SK-N-SH (cell line): ENCODE measurements at regions of chr9 and their contacts with region 1.

Region 1: DNA sequence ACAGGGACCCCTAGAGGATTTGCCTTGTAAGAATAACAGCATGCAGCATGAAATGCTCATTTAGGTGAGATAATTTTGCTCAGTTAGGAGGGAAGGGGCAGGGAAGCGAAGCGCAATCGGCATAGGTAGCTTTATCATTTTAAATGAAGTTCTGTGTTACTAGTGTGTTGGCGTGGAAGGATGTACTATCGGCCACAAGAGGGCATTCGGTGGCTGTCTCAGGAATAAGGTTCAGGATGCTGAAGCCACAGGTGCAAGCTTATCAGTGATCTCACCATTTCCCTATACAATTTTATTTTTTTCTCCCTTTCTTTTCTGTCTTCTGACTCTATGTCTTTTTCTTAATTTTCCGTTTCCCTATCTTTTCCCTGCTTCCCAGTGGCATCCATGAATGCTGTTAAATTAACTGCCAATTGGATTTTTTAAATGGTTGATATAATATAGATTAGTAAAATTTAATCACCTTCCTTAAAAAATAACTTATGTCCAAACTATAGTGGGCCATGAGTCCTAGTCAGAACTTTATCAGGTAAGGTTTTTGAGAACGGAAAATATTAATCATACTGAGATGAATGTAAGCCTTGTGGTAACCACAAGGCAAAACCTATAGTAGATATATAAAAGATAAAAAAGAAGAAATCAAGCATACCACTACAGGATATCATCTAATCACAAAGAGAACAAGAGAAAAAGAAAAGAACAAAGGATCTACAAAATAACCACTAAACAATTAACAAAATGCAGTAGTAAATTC is 1.2 kb upstream of the INSL6 start:
- DNase-seq: peak; percentile 68
- H3K4me3 ChIP-seq: peak overlapping the region in 1 of 2 experiments; percentile 40; a peak in 1 of 4 replicates
- H3K27ac ChIP-seq: no peak overlapping the region
- H3K4me1 ChIP-seq: peaks cover 0 to 5% of the 10 kb centered on the region in 2 experiments; a peak in 1 of 4 replicates
- H3K27me3 ChIP-seq: no peaks in the 10 kb centered on the region
- CTCF ChIP-seq: peak; percentile 81
- EP300 ChIP-seq: no peak
- RAD21 ChIP-seq: peak; percentile 93

Region 2: DNA sequence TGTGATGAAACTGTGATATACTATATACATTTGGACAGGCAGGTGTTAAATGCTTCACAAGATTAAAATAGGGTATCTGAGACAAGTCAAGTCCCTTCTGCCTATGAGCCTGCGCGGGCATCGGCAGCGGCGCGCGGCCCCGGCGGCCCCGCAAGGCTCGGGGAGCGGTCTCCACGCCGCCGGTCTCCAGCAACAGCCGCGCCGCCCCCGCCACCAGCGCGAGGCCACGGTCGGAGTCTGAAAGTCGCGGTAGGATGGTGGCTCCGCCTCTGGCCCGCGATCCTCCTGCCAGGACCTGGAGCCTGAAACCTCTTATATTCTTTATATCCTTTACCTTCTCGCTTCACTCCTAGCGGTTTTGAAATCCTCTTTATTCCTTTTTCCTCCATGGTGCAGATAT is 100.6 kb before region 1 on chr9:
- CTCF ChIA-PET with region 1: no interaction called
- POLR2A ChIA-PET with region 1: no interaction called
- DNase-seq: no peak
- H3K4me3 ChIP-seq: no peak overlapping the region
- H3K27ac ChIP-seq: no peak overlapping the region
- H3K4me1 ChIP-seq: no peaks in the 10 kb centered on the region
- H3K27me3 ChIP-seq: no peaks in the 10 kb centered on the region
- CTCF ChIP-seq: no peak
- EP300 ChIP-seq: no peak
- RAD21 ChIP-seq: no peak

Region 3: GRCh38 chr9:5425006-5425628 is 238.5 kb after region 1 on chr9:
- CTCF ChIA-PET with region 1: interaction called, 21 read pairs
- POLR2A ChIA-PET with region 1: no interaction called
- DNase-seq: peak; percentile 37
- H3K4me3 ChIP-seq: no peak overlapping the region
- H3K27ac ChIP-seq: no peak overlapping the region
- H3K4me1 ChIP-seq: no peaks in the 10 kb centered on the region; a peak in 1 of 4 replicates
- H3K27me3 ChIP-seq: no peaks in the 10 kb centered on the region
- CTCF ChIP-seq: peak; percentile 55
- EP300 ChIP-seq: no peak
- RAD21 ChIP-seq: peak; percentile 67

Region 4: DNA sequence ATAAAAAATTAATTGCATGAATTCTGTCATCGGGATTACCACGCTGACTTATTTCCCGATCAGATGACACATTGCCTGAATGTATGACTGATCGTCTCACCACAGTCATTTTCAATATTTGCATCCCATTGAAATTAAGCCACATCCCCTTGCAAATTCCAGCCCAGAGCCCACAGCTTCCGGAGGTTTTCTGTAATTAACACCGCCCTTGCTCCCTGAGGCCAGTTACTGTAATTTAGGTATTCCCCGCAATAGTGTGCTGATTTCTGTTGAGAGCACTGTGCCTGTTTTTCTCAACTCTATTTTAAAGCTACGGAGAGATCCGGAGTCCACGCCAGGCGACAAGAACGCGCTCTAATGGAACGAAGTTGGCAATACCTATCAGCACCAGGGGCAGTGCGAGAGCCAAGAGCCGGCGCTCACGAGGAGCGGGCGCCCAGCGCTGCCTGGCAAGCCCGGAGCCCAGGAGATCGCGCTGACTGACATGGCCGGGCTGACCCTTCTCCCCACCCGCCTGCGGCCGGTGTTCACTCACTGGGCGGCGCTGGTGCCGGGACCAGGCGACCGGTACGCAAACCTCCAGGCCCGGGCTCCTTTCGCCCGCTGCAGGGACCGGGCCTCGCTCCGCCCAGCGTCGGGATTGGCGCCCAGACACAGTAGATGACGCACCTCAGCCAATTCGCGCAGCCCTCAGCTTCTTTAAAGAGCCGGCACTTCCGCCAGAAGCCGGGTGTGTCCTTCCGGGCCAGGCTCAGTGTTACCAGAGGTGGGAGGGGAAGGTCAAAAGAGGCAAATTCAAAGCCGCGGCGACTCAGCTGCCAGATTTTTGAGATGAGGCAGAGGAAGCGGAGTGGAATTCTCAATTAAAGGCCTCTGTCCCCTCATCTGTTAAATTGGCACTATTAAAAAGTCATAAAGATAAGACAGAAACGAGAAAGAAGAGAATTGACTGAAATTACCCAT is 250.9 kb after region 1 on chr9 and contains the start of gene PLGRKT:
- CTCF ChIA-PET with region 1: interaction called, 71 read pairs
- POLR2A ChIA-PET with region 1: interaction called, 3 read pairs
- DNase-seq: peak; percentile 92
- H3K4me3 ChIP-seq: peak within 1 kb of the TSS; percentile 85 to 86
- H3K27ac ChIP-seq: peak within 1 kb of the TSS; percentile 90 to 96
- H3K4me1 ChIP-seq: peaks cover 6 to 15% of the 10 kb centered on the region in 2 experiments
- H3K27me3 ChIP-seq: no peaks in the 10 kb centered on the region
- CTCF ChIP-seq: peak; percentile 36
- EP300 ChIP-seq: 0 out of 4 replicates have a peak, but pooled peaks of 1 of the 2 experiments have one; percentile 23
- RAD21 ChIP-seq: no peak
- polyA plus RNA-seq, gene PLGRKT: 11.4 and 13.1 TPM in 2 replicates

Region 5: GRCh38 chr9:5450359-5451091 is 263.9 kb after region 1 on chr9 and contains the start of gene CD274:
- CTCF ChIA-PET with region 1: interaction called, 36 read pairs
- POLR2A ChIA-PET with region 1: no interaction called
- DNase-seq: peak; percentile 82
- H3K4me3 ChIP-seq: peak within 1 kb of the TSS; percentile 64 to 67
- H3K27ac ChIP-seq: peak within 1 kb of the TSS; percentile 67 to 75
- H3K4me1 ChIP-seq: peaks cover 6 to 21% of the 10 kb centered on the region in 2 experiments
- H3K27me3 ChIP-seq: no peaks in the 10 kb centered on the region
- CTCF ChIP-seq: peak; percentile 67
- EP300 ChIP-seq: no peak
- RAD21 ChIP-seq: peak; percentile 76
- polyA plus RNA-seq, gene CD274: 25.8 and 30.9 TPM in 2 replicates

Region 6: DNA sequence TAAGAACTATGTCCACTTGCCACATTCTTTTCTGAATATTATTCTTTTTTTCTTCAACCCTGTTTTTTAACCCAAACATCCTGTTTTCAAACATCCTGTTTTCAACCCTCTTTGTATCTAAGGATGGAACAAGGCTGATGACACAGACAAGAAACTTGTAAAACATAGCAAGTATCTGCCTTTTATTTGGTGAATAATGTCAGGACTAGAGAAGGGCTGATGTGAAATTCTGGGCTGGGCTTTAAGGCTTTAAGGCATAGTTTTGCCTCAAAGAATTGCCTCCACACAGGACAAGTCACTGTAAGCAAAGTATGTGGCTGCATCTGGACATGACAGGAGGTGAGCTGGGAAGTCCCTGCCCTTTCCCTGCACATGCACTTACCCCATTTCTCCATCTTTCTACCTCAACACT is 399.8 kb after region 1 on chr9:
- CTCF ChIA-PET with region 1: interaction called, 28 read pairs
- POLR2A ChIA-PET with region 1: no interaction called
- DNase-seq: no peak
- H3K4me3 ChIP-seq: no peak overlapping the region
- H3K27ac ChIP-seq: peak overlapping the region in 1 of 2 experiments; percentile 86; a peak in 2 of 4 replicates
- H3K4me1 ChIP-seq: peaks cover 0 to 15% of the 10 kb centered on the region in 2 experiments; a peak in 2 of 4 replicates
- H3K27me3 ChIP-seq: no peaks in the 10 kb centered on the region
- CTCF ChIP-seq: no peak
- EP300 ChIP-seq: no peak
- RAD21 ChIP-seq: no peak

Region 7: GRCh38 chr9:5593904-5594303 is 407.3 kb after region 1 on chr9:
- CTCF ChIA-PET with region 1: interaction called, 30 read pairs
- POLR2A ChIA-PET with region 1: no interaction called
- DNase-seq: no peak
- H3K4me3 ChIP-seq: no peak overlapping the region
- H3K27ac ChIP-seq: no peak overlapping the region
- H3K4me1 ChIP-seq: no peaks in the 10 kb centered on the region; a peak in 1 of 4 replicates
- H3K27me3 ChIP-seq: no peaks in the 10 kb centered on the region
- CTCF ChIP-seq: no peak
- EP300 ChIP-seq: no peak
- RAD21 ChIP-seq: no peak